Activated naive CD4-positive, alpha-beta T cell treated with anti-CD3 and anti-CD28 coated beads for 36 hours (primary cell): ENCODE measurements at regions of chr3 and their contacts with region 1.

Region 1: DNA sequence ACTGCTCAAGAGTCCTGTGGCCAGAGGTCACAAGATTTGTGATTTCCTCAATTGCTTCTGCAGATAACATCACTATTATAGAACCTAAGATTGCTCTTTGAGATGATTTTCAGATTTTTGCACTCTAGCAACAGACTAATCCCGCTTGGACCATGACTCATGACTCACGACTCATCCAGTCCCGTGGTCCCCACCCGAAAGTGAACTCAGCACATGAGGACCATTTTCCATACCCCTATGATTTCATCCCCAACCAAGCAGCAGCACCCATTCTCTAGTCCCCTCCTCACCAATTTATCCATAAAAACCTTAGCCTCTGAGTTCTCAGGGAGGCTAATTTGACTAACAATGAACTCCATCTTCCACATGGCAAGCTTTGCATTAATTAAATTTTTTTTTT is 106.3 kb upstream of the ALCAM start:
- DNase-seq: no peak
- H3K4me3 Mint-ChIP-seq: no peak overlapping the region
- H3K27ac Mint-ChIP-seq: no peak overlapping the region
- H3K4me1 Mint-ChIP-seq: no peaks in the 10 kb centered on the region
- H3K27me3 Mint-ChIP-seq: peaks cover 6% of the 10 kb centered on the region

Region 2: GRCh38 chr3:104628185-104628789 is 632.1 kb before region 1 on chr3:
- CTCF ChIA-PET with region 1: no interaction called
- intact Hi-C with region 1: loop called (anchors 2 kb)
- DNase-seq: no peak
- H3K4me3 Mint-ChIP-seq: no peak overlapping the region
- H3K27ac Mint-ChIP-seq: no peak overlapping the region
- H3K4me1 Mint-ChIP-seq: no peaks in the 10 kb centered on the region
- H3K27me3 Mint-ChIP-seq: peaks cover 5% of the 10 kb centered on the region

Region 3: DNA sequence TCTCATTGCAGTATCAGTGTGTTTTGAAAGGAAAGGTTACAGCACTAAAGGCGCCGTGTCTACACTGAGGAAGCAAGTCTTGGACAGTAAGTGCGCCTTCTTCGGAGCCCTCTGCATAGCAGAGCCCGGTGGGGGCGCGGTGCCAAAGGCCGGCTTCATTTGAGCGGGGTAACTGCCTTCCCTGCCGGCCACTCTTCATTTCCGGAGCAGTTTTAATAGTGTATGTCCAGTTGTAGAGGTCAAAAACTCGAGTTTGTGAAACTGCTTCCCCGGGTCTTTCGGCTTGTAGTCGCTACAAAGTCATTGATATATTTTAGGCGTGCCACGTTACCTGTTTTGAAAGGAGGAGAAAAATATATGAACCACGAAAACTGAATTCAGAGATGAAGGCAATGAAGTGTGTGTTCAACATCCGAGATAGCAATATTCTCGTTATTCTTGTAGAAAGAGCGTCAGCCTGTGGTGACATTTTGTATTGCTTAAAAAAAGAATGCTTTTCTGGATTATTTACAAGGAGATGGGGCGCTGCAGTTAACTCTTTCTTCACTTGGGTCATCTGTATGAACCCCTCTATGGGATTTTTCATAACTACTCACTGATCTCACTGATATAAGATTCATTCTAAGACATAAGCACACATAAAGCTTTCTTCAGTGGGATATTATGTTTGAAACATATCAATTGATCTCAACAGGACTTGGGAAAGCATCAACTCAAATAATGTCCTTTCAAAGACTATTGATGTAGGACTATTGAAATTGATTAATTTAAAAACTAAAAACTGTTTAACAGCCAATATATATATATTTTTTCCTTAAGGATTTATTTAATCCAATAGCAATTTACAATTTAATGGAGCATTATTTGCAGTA is 109.4 kb after region 1 on chr3:
- CTCF ChIA-PET with region 1: no interaction called
- intact Hi-C with region 1: no loop called
- DNase-seq: peak; percentile 30
- H3K4me3 Mint-ChIP-seq: peak overlapping the region; percentile 93
- H3K27ac Mint-ChIP-seq: peak overlapping the region; percentile 97
- H3K4me1 Mint-ChIP-seq: peaks cover 24% of the 10 kb centered on the region
- H3K27me3 Mint-ChIP-seq: peaks cover 16% of the 10 kb centered on the region

Region 4: DNA sequence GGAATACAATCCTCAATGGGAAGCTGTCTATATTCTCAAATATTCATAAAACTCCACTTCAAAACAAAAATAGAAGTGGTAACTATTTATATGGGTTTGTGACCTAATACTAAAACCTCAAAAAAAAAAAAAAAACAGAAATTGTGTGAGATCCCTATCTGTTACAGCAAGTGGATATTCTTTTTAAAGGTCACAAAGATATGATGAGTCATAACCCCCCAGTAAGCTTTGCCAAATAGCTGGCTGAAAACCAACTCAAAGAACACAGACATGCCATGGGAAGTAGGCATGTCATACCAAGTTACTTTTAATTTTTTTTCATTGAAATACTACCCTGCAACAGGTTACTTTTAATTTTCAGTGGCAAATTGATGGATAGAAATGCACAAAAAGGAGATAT is 546.0 kb after region 1 on chr3:
- CTCF ChIA-PET with region 1: no interaction called
- intact Hi-C with region 1: no loop called
- DNase-seq: no peak
- H3K4me3 Mint-ChIP-seq: no peak overlapping the region
- H3K27ac Mint-ChIP-seq: no peak overlapping the region
- H3K4me1 Mint-ChIP-seq: peaks cover 62% of the 10 kb centered on the region
- H3K27me3 Mint-ChIP-seq: no peaks in the 10 kb centered on the region